MCF 10A (cell line): ENCODE measurements at regions of chr19 and their contacts with region 1.

Region 1: DNA sequence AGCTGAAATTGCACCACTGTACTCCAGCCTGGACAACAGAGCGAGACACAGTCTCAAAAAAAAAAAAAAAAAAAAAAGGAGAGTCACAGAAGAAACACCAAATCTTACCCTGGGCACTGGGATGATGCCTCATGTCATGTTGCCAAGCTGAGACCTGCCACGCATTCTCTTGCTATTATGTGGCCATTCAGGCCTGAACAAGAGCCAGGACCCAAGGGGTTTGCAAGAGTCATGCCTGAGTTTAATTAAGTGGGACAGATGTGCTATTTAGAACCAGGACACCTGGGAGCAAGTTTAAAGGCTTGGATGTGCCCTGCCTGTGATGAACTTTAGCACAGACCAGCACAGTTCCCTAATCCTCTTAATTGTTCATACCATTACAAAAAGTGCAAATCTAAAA is 9.8 kb downstream of the PNMA8A start:
- DNase-seq: peak; percentile 73
- H3K4me3 Mint-ChIP-seq: no peak overlapping the region
- H3K27ac Mint-ChIP-seq: no peak overlapping the region
- H3K4me1 Mint-ChIP-seq: peaks cover 3% of the 10 kb centered on the region
- H3K27me3 Mint-ChIP-seq: no peaks in the 10 kb centered on the region
- CTCF ChIP-seq: no peak

Region 2: DNA sequence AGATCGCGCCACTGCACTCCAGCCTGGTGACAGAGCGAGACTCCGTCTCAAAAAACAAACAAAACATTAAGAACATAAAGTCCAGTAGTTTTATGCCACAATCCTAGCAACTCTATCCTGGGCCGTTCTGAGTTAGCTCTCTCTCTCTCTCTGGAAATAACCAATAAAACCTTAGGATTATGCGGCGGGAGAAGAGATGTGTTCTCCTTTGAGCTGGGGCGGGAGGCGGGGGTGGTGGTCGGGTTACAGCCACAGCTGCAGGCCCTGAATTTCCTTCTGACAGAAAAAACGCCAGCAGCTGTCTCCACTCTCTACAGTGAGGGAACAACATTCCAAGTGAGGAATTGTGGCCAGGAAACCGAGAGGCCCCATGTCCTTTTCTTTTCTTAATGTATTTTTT is 18.9 kb after region 1 on chr19:
- CTCF ChIA-PET with region 1: interaction called, 4 read pairs
- POLR2A ChIA-PET with region 1: interaction called, 10 read pairs
- intact Hi-C with region 1: no loop called
- DNase-seq: no peak
- H3K4me3 Mint-ChIP-seq: no peak overlapping the region
- H3K27ac Mint-ChIP-seq: no peak overlapping the region
- H3K4me1 Mint-ChIP-seq: peaks cover 14% of the 10 kb centered on the region
- H3K27me3 Mint-ChIP-seq: no peaks in the 10 kb centered on the region
- CTCF ChIP-seq: no peak

Region 3: DNA sequence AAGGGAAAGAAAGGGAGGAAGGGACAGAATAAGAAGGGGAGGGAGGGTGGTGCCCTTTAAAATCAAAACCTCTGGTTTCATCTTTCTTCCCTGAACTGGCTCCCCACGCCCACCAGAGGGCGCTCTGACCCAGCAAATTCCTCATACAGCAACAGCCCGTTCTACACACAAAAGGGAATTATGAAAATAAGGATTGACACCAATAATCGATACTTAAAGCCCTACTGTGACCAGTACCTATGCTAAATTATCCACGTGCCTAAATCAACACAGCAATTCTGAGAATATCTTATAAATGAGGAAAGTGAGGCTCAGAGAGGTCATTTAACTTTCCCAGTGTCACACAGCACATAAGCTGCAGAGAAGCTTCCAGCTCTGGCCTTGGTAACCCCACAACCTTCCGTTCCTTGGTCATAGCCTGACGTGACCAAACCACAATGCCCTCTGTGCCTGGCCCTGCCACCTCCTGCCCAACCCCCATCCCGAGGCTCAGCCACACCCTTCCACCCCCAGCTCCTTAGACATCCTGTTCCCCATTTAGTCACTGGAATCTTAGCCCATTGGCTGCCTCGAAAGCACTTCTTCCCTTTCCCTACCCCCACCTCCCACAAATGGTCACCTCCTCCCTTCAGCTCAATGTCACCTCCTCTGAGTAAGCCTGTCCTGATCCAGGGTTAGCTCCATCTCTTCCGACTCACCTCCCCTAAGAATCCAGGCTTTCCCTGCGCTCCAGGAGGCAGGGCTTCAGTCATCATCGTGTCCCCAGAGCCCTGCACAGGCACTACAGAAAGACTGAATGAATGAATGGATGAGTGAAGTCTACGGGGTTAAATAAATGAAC is 68.3 kb after region 1 on chr19:
- CTCF ChIA-PET with region 1: no interaction called
- POLR2A ChIA-PET with region 1: no interaction called
- intact Hi-C with region 1: no loop called
- DNase-seq: peak; percentile 75
- H3K4me3 Mint-ChIP-seq: peak overlapping the region; percentile 39
- H3K27ac Mint-ChIP-seq: no peak overlapping the region
- H3K4me1 Mint-ChIP-seq: peaks cover 15% of the 10 kb centered on the region
- H3K27me3 Mint-ChIP-seq: no peaks in the 10 kb centered on the region
- CTCF ChIP-seq: peak; percentile 94

Region 4: GRCh38 chr19:46546194-46546896 is 84.8 kb after region 1 on chr19:
- CTCF ChIA-PET with region 1: no interaction called
- POLR2A ChIA-PET with region 1: no interaction called
- intact Hi-C with region 1: no loop called
- DNase-seq: peak; percentile 77
- H3K4me3 Mint-ChIP-seq: peak overlapping the region; percentile 62
- H3K27ac Mint-ChIP-seq: no peak overlapping the region
- H3K4me1 Mint-ChIP-seq: no peaks in the 10 kb centered on the region
- H3K27me3 Mint-ChIP-seq: no peaks in the 10 kb centered on the region
- CTCF ChIP-seq: no peak